ENCODE measurements at regions of chr2 and their contacts with region 1.

Region 1: DNA sequence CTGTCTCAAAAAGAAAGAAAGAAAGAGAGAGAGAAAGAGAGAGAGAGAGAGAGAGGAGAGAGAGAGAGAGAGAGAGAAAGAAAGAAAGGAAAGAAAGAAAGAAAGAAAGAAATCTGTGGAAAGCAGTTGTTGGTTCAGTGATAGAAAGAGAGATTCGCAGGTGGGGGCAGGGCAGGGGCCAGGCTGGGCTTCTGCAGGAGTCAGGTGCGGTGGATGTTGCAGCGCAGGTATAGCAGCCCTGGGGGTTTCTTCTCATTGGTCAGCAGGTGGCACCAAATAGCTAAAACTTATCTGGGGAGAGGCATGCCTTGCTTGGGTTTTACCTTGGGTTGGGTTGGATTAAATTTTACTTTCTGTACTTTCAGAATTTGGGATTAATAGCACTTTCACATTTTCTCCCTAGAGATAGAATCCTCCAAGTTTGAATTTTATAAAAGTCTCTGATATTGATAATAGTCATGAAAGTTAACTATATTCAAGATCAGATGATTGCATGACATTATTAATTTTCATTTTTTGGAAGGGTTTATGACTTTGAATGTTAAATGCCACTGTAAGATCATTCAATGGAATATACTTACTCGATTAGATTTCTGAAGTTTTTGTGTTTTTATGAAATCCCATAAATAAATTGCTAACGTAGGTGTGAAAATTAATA is 66.6 kb downstream of the SPTBN1 start:
- DNase-seq: peak; percentile 82
- H3K4me3 Mint-ChIP-seq: peak overlapping the region; percentile 43
- H3K27ac Mint-ChIP-seq: peak overlapping the region; percentile 92
- H3K4me1 Mint-ChIP-seq: peaks cover 69% of the 10 kb centered on the region
- H3K27me3 Mint-ChIP-seq: no peaks in the 10 kb centered on the region
- CTCF ChIP-seq: peak; percentile 59

Region 2: DNA sequence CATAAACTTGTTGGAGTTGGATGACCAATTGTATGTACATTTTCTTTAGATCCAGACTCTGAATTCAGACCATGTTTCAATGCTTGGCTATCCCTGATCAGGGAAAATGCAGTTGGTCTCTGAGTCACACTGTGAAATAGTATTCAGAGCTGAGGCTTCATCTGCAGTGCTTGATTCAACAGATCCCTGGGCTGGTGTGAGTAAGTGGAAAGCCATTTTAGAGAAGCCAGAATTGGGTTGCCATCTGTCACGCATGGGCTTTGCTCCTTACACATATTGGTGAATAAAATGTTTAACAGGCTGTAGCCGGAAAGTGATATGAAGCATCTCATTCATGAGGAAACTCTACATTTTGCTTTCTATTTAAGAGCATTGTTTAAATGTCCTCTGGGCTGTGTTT is 457.3 kb before region 1 on chr2:
- CTCF ChIA-PET with region 1: no interaction called
- intact Hi-C with region 1: no loop called
- DNase-seq: no peak
- H3K4me3 Mint-ChIP-seq: no peak overlapping the region
- H3K27ac Mint-ChIP-seq: no peak overlapping the region
- H3K4me1 Mint-ChIP-seq: no peaks in the 10 kb centered on the region
- H3K27me3 Mint-ChIP-seq: no peaks in the 10 kb centered on the region
- CTCF ChIP-seq: no peak

Region 3: GRCh38 chr2:54455563-54456361 is 67.0 kb before region 1 on chr2 and contains the start of gene SPTBN1:
- CTCF ChIA-PET with region 1: no interaction called
- intact Hi-C with region 1: no loop called
- DNase-seq: peak; percentile 80
- H3K4me3 Mint-ChIP-seq: peak within 1 kb of the TSS; percentile 97
- H3K27ac Mint-ChIP-seq: peak within 1 kb of the TSS; percentile 66
- H3K4me1 Mint-ChIP-seq: peaks cover 31% of the 10 kb centered on the region
- H3K27me3 Mint-ChIP-seq: no peaks in the 10 kb centered on the region
- CTCF ChIP-seq: no peak
- total RNA-seq, gene SPTBN1: 611 and 687 TPM in 2 replicates

Region 4: GRCh38 chr2:54558188-54559005 is 35.6 kb after region 1 on chr2:
- CTCF ChIA-PET with region 1: interaction called, 8 read pairs
- intact Hi-C with region 1: loop called (anchors 2 kb)
- DNase-seq: peak; percentile 72
- H3K4me3 Mint-ChIP-seq: peak overlapping the region; percentile 84
- H3K27ac Mint-ChIP-seq: peak overlapping the region; percentile 93
- H3K4me1 Mint-ChIP-seq: peaks cover 36% of the 10 kb centered on the region
- H3K27me3 Mint-ChIP-seq: no peaks in the 10 kb centered on the region
- CTCF ChIP-seq: no peak

Region 5: GRCh38 chr2:54570925-54571694 is 48.4 kb after region 1 on chr2:
- CTCF ChIA-PET with region 1: interaction called, 3 read pairs
- intact Hi-C with region 1: loop called (anchors 5 kb)
- DNase-seq: peak; percentile 62
- H3K4me3 Mint-ChIP-seq: peak overlapping the region; percentile 84
- H3K27ac Mint-ChIP-seq: peak overlapping the region; percentile 98
- H3K4me1 Mint-ChIP-seq: peaks cover 89% of the 10 kb centered on the region
- H3K27me3 Mint-ChIP-seq: no peaks in the 10 kb centered on the region
- CTCF ChIP-seq: no peak

Region 6: GRCh38 chr2:54613794-54614257 is 91.1 kb after region 1 on chr2:
- CTCF ChIA-PET with region 1: interaction called, 3 read pairs
- intact Hi-C with region 1: loop called (anchors 5 kb)
- DNase-seq: peak; percentile 36
- H3K4me3 Mint-ChIP-seq: peak overlapping the region; percentile 20
- H3K27ac Mint-ChIP-seq: peak overlapping the region; percentile 66
- H3K4me1 Mint-ChIP-seq: peaks cover 88% of the 10 kb centered on the region
- H3K27me3 Mint-ChIP-seq: no peaks in the 10 kb centered on the region
- CTCF ChIP-seq: no peak

Region 7: GRCh38 chr2:54634564-54635511 is 112.1 kb after region 1 on chr2:
- CTCF ChIA-PET with region 1: interaction called, 4 read pairs
- intact Hi-C with region 1: loop called (anchors 5 kb)
- DNase-seq: peak; percentile 49
- H3K4me3 Mint-ChIP-seq: peak overlapping the region; percentile 34
- H3K27ac Mint-ChIP-seq: peak overlapping the region; percentile 83
- H3K4me1 Mint-ChIP-seq: peaks cover 76% of the 10 kb centered on the region
- H3K27me3 Mint-ChIP-seq: no peaks in the 10 kb centered on the region
- CTCF ChIP-seq: no peak

Region 8: DNA sequence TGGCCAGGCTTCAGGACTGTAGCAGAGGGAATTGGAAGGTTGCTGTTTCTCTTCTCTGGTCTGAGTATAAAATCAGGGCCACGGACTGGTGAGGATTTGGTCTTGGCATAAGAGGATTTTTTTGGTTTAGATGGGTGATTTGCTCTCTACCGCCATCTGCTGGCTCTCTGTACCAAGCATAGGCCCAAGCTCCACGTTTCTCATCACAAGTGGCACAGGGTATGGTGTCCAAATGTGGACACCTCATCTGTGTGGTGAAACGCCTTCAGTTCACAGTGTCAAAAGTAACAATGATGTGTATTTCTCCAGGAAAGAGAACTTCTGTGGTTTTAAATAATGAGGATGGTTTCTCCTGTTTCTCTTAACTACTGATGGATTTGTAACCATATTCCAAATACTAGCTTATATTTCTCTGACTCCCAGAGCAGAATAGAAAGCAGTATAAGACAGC is 315.9 kb after region 1 on chr2:
- CTCF ChIA-PET with region 1: no interaction called
- intact Hi-C with region 1: loop called (anchors 10 kb)
- DNase-seq: peak; percentile 63
- H3K4me3 Mint-ChIP-seq: no peak overlapping the region
- H3K27ac Mint-ChIP-seq: no peak overlapping the region
- H3K4me1 Mint-ChIP-seq: no peaks in the 10 kb centered on the region
- H3K27me3 Mint-ChIP-seq: peaks cover 15% of the 10 kb centered on the region
- CTCF ChIP-seq: peak; percentile 71